Aorta (tissue), 5 donors: ENCODE measurements at regions of chr12 and their contacts with region 1.

Region 1: GRCh38 chr12:111905502-111905901 is 63.5 kb downstream of the MAPKAPK5 start:
- DNase-seq: no peak
- ATAC-seq: no peak
- H3K4me3 ChIP-seq: no peak overlapping the region
- H3K27ac ChIP-seq: no peak overlapping the region
- H3K4me1 ChIP-seq: no peaks in the 10 kb centered on the region
- H3K27me3 ChIP-seq: no peaks in the 10 kb centered on the region

Region 2: DNA sequence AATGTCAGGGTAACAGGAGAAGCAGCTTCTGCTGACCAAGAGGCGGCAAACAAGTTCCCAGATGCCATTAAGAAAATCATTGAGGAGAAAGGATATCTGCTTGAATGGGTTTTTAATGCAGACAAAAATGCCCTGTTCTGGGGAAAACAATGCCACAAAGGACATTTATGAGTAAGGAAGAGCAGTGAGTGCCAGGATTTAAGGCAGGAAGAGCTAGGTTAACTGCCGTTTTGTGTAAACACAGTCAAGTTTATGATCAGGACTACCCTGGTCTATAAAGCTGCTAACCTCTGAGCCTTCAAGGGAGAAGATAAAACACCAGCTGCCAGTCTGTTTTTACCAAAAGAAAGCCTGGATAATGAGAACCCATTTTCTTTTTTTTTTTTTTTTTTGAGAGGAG is 55.0 kb before region 1 on chr12:
- intact Hi-C with region 1: loop called in 1 of 2 experiments (anchors 5 kb)
- DNase-seq: no peak
- ATAC-seq: no peak
- H3K4me3 ChIP-seq: no peak overlapping the region
- H3K27ac ChIP-seq: no peak overlapping the region
- H3K4me1 ChIP-seq: no peaks in the 10 kb centered on the region
- H3K27me3 ChIP-seq: no peaks in the 10 kb centered on the region

Region 3: DNA sequence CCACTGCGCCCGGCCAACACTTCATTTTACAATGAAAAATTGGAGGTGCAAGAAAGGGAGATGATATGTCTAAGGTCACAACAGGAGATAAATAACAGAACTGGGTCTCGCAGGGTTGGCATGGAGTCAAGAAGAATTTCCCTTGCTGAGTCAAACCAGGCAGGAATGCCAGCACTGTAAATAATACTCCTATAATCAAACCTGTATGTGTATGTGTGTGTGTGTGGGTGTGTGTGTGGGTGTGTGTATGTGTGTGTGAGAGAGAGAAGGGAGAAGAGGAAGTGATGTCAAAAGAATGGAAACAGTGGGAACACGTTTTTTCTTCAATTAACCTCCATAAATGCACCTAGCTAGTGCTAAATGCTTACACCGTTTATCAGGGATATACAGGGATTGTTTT is 37.1 kb after region 1 on chr12:
- intact Hi-C with region 1: no loop called
- DNase-seq: no peak
- ATAC-seq: no peak
- H3K4me3 ChIP-seq: no peak overlapping the region
- H3K27ac ChIP-seq: no peak overlapping the region
- H3K4me1 ChIP-seq: no peaks in the 10 kb centered on the region
- H3K27me3 ChIP-seq: no peaks in the 10 kb centered on the region